ENCODE measurements at regions of chr2 and their contacts with region 1.

Region 1: GRCh38 chr2:88669371-88670214 is 21.9 kb upstream of the RPIA start:
- DNase-seq: peak; percentile 32
- ATAC-seq: peak; percentile 93
- H3K4me3 ChIP-seq: no peak overlapping the region
- H3K27ac ChIP-seq: no peak overlapping the region
- H3K4me1 ChIP-seq: no peaks in the 10 kb centered on the region
- H3K27me3 ChIP-seq: no peaks in the 10 kb centered on the region
- CTCF ChIP-seq: peak; percentile 64 to 80 (median 74); a peak in 5 of 6 replicates
- EP300 ChIP-seq: no peak
- POLR2A ChIP-seq: no peak
- RAD21 ChIP-seq: peak; percentile 94

Region 2: DNA sequence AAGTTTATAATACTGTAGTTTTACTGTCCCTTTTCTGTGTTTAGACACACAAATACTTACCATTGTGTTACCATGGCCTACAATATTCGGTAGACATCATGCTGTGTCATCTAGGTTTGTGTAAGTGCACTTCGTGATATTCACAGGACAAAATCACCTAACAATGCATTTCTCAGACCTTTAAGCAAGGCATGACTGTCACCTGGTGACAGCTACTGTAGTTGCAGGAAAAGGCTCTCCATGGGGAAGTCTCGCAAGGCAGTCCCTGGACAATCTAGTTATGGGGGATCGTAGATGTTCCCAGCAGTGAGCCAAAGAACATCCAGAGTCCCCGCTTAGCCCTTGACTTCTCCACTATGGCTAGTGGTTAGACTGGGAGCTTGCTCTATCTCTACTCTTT is 115.4 kb before region 1 on chr2:
- CTCF ChIA-PET with region 1: interaction called, 10 read pairs
- POLR2A ChIA-PET with region 1: no interaction called
- RAD21 ChIA-PET with region 1: interaction called, 7 read pairs
- SMC1A ChIA-PET with region 1: interaction called, 8 read pairs
- in situ Hi-C with region 1: no loop called
- intact Hi-C with region 1: no loop called
- DNase-seq: no peak
- ATAC-seq: no peak
- H3K4me3 ChIP-seq: no peak overlapping the region
- H3K27ac ChIP-seq: no peak overlapping the region
- H3K4me1 ChIP-seq: no peaks in the 10 kb centered on the region
- H3K27me3 ChIP-seq: no peaks in the 10 kb centered on the region; a peak in 1 of 4 replicates
- CTCF ChIP-seq: peak in 2 of 3 experiments; percentile 17 to 29; a peak in 3 of 6 replicates
- EP300 ChIP-seq: no peak
- POLR2A ChIP-seq: no peak
- RAD21 ChIP-seq: peak; percentile 42

Region 3: DNA sequence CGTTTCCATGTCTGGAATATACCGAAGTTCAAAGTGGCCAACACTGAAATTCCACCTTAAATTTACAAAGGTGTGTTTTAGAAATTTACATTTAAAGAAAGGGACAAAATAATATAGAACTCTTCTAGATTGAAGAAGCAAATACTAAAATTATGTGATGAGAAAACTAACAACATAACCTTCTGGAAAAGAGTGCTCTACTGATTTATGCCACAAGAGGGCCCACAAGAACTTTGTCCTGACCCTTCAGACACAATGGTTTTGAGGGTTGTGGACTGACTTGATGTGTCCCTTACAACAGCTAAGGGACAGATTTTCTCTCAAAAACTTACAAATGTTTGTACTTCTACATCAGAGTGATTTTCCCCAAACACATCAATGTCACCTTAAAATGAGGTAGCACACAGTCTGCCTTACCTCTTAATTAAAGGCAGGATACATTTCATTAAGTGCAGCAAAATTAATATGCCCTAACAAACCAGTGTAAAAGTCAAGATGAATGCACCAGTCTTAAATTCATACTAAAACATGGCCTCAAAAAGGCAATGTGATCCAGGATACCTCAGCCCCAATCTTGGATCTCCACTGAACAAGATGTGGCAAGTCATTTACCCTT is 78.5 kb before region 1 on chr2:
- CTCF ChIA-PET with region 1: interaction called, 399 read pairs
- POLR2A ChIA-PET with region 1: interaction called, 4 read pairs
- RAD21 ChIA-PET with region 1: interaction called, 69 read pairs
- SMC1A ChIA-PET with region 1: interaction called, 270 read pairs
- in situ Hi-C with region 1: loop called (anchors 5 kb)
- intact Hi-C with region 1: loop called (anchors 1 kb)
- DNase-seq: peak; percentile 45
- ATAC-seq: peak; percentile 94
- H3K4me3 ChIP-seq: no peak overlapping the region
- H3K27ac ChIP-seq: no peak overlapping the region
- H3K4me1 ChIP-seq: no peaks in the 10 kb centered on the region
- H3K27me3 ChIP-seq: no peaks in the 10 kb centered on the region
- CTCF ChIP-seq: peak; percentile 73 to 90 (median 74)
- EP300 ChIP-seq: no peak
- POLR2A ChIP-seq: no peak
- RAD21 ChIP-seq: peak; percentile 98

Region 4: DNA sequence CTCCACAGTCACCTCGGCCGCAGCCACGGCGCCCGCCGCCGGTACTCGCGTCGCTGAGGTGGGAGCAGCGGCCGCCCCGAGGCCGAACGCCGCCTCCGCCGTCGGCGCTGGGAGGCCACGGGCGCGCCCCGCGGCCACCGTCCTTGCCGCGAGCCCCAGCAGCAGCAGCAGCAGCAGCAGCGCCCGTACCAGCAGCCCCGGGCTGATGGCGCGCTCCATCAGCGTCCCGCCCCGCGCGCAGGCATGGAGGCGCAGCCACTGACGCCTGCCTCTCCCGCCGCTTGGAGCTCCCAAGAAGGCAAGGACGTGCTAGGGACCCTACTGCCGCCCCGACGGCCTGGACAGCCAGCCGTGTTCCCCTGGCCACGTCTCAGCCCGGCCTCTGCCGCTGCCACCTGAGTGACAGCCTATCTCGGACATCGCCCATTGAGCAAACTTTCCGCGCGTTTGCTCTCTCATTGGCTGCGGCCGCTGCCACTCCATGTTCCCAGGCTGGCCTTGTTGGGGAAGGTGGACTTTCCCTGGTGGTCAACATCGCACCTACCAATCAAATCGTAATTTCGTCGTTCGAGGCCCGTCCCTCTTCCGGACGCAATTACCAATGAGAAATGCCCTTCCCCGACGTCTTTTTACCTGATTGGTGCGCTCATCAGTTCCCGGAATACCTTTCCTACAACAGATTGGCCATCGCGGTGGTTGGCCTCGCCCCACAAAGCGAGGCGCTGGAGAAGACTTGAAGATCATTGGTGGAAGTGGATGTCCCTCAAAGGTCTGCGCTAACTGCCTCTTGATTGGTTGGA is 42.3 kb before region 1 on chr2 and contains the start of gene EIF2AK3:
- CTCF ChIA-PET with region 1: interaction called, 45 read pairs
- POLR2A ChIA-PET with region 1: interaction called, 3 read pairs
- RAD21 ChIA-PET with region 1: interaction called, 14 read pairs
- SMC1A ChIA-PET with region 1: interaction called, 6 read pairs
- in situ Hi-C with region 1: no loop called
- intact Hi-C with region 1: loop called (anchors 5 kb)
- DNase-seq: peak; percentile 100
- ATAC-seq: peak; percentile 90
- H3K4me3 ChIP-seq: peak within 1 kb of the TSS; percentile 79
- H3K27ac ChIP-seq: peak within 1 kb of the TSS; percentile 91
- H3K4me1 ChIP-seq: peaks cover 4% of the 10 kb centered on the region; the same call in 1 of the 2 replicates
- H3K27me3 ChIP-seq: no peaks in the 10 kb centered on the region
- CTCF ChIP-seq: no peak
- EP300 ChIP-seq: no peak
- POLR2A ChIP-seq: peak; percentile 93
- RAD21 ChIP-seq: no peak
- polyA plus RNA-seq, gene EIF2AK3: 5.0 to 8.2 TPM

Region 5: DNA sequence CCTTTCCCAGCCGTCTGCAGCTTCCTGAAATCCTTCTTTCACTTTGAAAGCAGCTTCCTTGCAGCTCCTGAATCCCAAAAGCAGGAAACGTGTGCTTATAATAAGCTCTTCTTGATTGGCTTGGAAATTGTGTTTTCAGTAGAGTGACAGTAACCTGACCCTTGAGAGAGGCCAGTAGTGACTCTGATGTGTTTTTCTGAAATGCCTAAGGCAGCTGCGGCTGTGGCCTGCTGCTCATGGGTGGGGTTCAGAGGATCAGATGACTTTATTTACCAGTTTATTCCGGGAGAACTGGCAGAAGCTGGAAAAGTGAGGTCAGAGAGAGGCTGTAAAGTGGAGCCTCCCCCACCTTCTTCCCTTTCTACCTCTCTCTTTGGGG is 10.1 kb before region 1 on chr2:
- CTCF ChIA-PET with region 1: interaction called, 33 read pairs
- POLR2A ChIA-PET with region 1: no interaction called
- RAD21 ChIA-PET with region 1: interaction called, 7 read pairs
- SMC1A ChIA-PET with region 1: interaction called, 8 read pairs
- in situ Hi-C with region 1: no loop called
- intact Hi-C with region 1: no loop called
- DNase-seq: no peak
- ATAC-seq: no peak
- H3K4me3 ChIP-seq: no peak overlapping the region
- H3K27ac ChIP-seq: no peak overlapping the region
- H3K4me1 ChIP-seq: no peaks in the 10 kb centered on the region
- H3K27me3 ChIP-seq: no peaks in the 10 kb centered on the region
- CTCF ChIP-seq: no peak
- EP300 ChIP-seq: no peak
- POLR2A ChIP-seq: no peak
- RAD21 ChIP-seq: no peak

Measured in GM12878 (cell line).